ENCODE measurements at regions of chr6 and their contacts with region 1.

Region 1: GRCh38 chr6:30025186-30025585 is 35.9 kb upstream of the POLR1H start:
- DNase-seq: no peak
- CTCF ChIP-seq: no peak

Region 2: GRCh38 chr6:29516108-29516507 is 509.1 kb before region 1 on chr6:
- CTCF ChIA-PET with region 1: no interaction called
- POLR2A ChIA-PET with region 1: no interaction called
- DNase-seq: no peak
- CTCF ChIP-seq: no peak

Region 3: DNA sequence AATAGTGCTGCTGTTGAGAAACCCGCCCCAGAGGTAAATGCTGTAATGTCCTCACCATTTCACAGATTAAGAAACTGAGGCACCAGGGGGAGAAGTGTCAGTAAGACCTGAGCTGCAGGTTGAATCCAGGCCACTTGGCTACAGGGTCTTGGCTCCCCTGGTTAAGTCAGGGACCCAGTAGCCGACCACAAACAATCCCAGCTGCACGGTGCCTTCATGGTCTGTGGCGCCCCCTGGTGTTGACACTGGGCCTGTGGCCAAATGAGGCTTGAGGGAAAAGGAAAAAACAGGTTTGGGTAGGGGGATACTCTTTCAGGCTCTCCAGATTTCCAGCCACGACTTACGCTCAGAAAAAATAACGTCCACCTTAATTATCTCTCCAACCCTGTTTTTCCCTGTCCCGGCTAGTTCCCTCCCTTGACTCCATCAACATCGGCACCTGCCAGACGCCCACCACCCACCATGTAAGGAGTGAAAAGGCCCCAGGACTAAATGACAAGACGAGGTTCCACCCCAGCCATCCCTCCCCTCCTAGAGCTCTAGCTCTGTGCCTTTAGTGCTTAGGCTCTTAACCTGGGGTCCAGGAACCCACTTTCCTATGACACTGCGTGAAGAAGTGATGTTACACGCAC is 11.8 kb before region 1 on chr6:
- CTCF ChIA-PET with region 1: interaction called, 18 read pairs
- POLR2A ChIA-PET with region 1: no interaction called
- DNase-seq: peak; percentile 34
- CTCF ChIP-seq: peak; percentile 67

Region 4: DNA sequence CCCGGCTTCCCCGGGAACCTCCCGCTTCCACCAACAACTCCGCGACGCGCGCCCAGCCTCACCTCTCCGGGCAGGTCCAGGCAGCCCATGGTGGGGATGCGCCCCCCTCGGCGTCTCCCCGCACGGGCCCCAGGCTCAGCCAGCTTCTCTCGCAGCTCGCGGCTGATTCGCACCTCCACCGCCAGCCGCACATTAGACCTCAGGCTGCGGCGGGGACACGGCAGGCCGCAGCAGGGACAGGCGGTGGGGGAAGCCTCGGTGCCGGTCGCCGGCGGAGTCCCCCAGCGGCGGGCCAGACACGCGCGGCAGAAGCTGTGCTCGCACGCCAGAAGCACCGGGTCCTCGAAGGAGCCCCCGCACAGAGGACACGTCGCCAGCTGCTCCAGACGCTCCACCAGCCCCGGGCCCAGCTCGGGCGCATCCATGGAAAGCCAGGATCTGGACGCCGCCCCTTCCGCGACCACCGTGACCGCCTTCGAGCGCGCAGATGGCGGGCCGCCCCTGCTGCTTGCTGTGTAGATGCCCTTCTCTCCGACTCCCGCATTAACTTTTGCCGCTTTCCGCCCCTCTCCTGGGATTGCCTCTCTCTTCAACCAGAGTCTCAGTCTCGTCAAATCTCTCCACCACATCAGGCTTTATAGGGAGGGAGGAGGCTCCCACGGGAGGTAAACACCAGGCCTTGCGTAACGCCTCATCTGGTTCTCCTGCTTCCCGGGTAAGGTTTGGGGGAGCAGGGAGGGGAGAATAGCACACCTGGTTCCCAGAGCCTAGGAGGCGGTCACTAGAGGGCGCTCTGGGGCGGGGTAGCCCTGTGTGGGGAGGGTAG is 50.2 kb after region 1 on chr6 and contains the start of gene RNF39:
- CTCF ChIA-PET with region 1: no interaction called
- POLR2A ChIA-PET with region 1: no interaction called
- DNase-seq: peak; percentile 32
- CTCF ChIP-seq: peak; percentile 17

Region 5: DNA sequence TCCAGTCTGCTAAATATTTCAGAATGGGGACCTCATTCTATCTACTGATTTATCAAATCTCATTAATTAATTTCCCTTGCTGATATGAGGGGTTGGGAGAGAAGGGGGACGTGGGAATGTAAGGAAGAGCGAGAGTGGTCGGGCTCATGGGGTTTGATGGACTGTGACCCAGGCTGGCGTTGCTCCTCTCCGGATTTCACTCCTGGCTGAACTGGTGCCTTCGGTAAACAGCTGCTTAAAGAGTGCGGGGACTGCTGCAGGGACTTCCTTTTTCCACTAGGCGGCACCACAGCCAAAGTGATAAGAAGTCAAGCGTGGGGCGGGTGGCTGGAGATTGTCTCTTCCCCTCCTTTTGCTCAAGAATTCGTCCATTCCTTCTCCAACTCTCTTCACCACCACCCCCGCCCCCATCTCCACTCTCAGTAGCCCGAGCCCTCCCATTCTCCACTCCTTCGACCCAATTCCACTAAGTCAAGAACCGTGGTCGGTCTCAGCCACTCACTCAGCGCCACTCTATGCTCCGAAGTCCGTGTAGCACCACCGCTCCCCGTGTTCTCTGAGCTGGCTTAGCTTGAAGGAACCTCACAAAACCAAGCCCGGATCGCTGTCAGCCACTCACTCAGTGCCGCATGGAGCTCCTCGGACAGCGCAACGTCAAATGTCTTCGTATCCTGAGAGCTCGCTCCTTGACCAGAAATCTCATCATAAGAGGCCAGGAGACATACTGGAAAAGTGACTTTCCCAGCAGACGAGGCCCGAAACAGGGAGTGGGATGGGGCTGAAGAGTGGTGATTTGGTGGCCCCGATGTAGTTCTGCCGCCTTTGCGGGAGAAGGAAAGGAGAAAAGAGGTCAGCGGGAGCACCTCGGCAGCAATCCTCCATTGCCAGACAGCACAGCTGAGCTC is 78.0 kb after region 1 on chr6:
- CTCF ChIA-PET with region 1: no interaction called
- POLR2A ChIA-PET with region 1: no interaction called
- DNase-seq: peak; percentile 89
- CTCF ChIP-seq: peak; percentile 98

Measured in GM10248 (cell line).